SK-N-SH (cell line): ENCODE measurements at regions of chr3 and their contacts with region 1.

Region 1: DNA sequence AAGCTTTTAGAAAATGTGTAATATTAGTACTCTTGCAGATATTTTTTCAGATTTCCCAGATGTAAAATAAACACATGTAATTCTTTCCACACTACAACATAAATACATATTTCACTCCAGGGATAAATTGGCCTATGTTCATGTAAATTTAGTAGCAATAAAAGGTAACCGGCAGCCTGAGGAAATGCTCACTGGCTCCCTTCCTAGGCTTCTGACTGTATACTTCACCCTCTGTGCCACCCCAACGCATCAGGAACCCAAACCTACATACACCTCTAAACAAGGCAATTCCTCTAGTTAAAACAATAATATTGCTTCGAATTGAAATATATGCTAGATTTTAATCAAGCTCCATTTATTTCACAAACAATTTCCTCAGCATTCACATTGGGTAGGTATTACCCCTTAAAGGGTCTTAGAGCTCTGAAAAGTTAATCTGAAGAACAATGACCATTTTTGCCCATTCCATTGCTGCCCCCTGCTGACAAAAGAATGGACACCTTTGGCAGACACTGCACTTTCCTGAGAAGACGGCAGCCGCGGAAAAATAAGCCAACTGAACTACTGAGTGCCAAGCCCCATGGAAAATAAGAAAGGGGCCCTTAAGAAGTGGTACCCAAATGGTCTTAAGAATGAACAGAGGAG is 212.5 kb downstream of the OSBPL10 start:
- DNase-seq: peak; percentile 38
- H3K4me3 ChIP-seq: no peak overlapping the region
- H3K27ac ChIP-seq: no peak overlapping the region
- H3K4me1 ChIP-seq: no peaks in the 10 kb centered on the region; a peak in 1 of 4 replicates
- H3K27me3 ChIP-seq: no peaks in the 10 kb centered on the region
- CTCF ChIP-seq: peak; percentile 56
- EP300 ChIP-seq: no peak
- RAD21 ChIP-seq: peak; percentile 91

Region 2: GRCh38 chr3:31550452-31551251 is 217.9 kb before region 1 on chr3:
- CTCF ChIA-PET with region 1: interaction called, 12 read pairs
- POLR2A ChIA-PET with region 1: no interaction called
- DNase-seq: peak; percentile 43
- H3K4me3 ChIP-seq: no peak overlapping the region
- H3K27ac ChIP-seq: no peak overlapping the region; a peak in 1 of 4 replicates
- H3K4me1 ChIP-seq: peaks cover 0 to 3% of the 10 kb centered on the region in 2 experiments; a peak in 2 of 4 replicates
- H3K27me3 ChIP-seq: no peaks in the 10 kb centered on the region
- CTCF ChIP-seq: peak; percentile 78
- EP300 ChIP-seq: no peak
- RAD21 ChIP-seq: peak; percentile 70

Region 3: DNA sequence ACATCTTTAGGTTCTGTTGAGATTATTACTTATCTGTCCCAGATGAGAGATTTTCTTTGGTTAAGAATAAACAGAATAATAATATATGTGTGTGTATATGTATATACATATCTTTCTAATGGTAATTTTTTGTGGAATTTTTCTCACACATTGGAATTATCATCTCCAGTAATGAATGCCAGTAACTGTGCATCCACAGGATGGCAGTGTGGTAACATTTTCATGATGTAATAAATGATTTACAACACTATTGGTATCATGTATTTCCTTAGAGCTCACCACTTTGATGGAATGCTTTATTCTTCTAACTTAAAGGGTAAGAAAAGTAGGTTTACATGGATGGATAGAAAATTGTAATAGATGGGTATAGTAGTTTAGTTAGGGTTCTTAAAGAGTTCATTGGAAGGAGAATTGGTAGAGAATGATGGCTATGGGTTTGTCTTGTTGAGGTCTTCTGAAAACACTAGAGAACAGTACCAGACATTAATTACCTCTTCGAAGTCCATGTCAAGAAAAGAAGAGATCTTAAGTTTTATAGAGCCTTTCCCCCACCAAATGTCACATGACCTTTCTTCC is 157.8 kb before region 1 on chr3:
- CTCF ChIA-PET with region 1: interaction called, 16 read pairs
- POLR2A ChIA-PET with region 1: no interaction called
- DNase-seq: peak; percentile 30
- H3K4me3 ChIP-seq: no peak overlapping the region
- H3K27ac ChIP-seq: no peak overlapping the region
- H3K4me1 ChIP-seq: peaks cover 0 to 7% of the 10 kb centered on the region in 2 experiments; a peak in 2 of 4 replicates
- H3K27me3 ChIP-seq: no peaks in the 10 kb centered on the region
- CTCF ChIP-seq: peak; percentile 60
- EP300 ChIP-seq: no peak
- RAD21 ChIP-seq: peak; percentile 78

Region 4: DNA sequence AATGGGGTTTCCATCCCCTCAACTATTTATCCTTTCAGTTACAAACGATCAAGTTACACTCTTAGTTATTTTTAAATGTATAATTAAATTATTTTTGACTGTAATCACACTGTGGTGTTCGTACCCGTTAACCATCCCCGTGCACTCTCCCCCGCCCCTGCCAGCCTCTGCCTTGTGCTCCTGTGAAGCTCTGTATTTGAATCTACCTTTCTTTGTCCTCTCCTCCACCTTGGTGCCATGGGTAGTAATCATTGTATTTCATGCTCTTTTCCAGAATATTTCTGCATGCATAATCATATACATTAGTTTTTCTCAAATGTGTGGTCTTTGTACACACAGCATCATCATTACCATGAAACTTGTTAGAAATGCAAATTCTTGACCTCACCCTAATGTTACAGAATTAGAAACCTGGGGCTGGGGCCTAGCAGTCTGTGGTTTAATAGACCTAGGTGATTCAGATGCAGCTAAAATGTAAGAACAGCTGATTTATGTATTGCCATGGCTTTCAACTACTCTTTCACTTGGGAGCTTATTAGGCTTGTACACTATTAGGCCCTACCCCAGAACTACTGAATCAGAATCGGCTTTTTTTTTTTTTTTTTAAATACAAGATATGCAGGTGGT is 144.4 kb before region 1 on chr3:
- CTCF ChIA-PET with region 1: interaction called, 14 read pairs
- POLR2A ChIA-PET with region 1: no interaction called
- DNase-seq: no peak
- H3K4me3 ChIP-seq: no peak overlapping the region
- H3K27ac ChIP-seq: no peak overlapping the region
- H3K4me1 ChIP-seq: 0 out of 4 replicates have a peak, but pooled peaks cover 0 to 6% of the 10 kb centered on the region in 2 experiments
- H3K27me3 ChIP-seq: no peaks in the 10 kb centered on the region
- CTCF ChIP-seq: no peak
- EP300 ChIP-seq: no peak
- RAD21 ChIP-seq: no peak

Region 5: DNA sequence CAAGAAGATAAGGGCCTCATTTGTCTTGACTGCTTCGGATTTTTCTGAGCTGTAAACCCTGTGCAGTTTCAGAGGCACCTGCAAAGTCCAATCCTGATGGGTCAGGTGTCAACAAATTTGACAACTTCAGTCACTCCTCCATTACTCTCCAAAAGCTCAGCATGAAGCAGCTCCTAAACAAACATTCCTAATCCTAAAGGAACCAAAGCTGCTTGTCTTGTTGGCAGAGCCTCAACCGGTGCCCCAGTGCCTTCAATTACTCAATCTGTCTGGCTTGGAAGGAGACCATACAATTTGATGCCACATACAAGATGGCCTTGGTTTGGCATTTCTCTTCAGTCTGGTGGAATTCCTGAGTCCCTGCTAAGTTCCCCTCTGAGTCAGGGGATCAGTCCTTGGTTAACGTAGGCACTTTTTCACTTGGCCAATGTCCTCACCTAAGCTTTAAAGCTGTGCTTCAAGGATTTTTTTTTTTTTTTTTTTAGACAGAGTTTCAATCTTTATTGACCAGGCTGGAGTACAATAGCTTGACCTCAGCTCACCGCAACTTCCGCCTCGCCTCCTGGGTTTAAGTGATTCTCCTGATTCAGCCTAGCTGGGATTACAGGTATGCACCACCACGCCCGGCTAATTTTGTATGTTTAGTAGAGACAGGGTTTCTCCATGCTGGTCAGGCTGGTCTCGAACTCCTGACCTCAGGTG is 15.7 kb before region 1 on chr3:
- CTCF ChIA-PET with region 1: interaction called, 14 read pairs
- POLR2A ChIA-PET with region 1: no interaction called
- DNase-seq: no peak
- H3K4me3 ChIP-seq: no peak overlapping the region
- H3K27ac ChIP-seq: no peak overlapping the region
- H3K4me1 ChIP-seq: peaks cover 0 to 19% of the 10 kb centered on the region in 2 experiments; a peak in 2 of 4 replicates
- H3K27me3 ChIP-seq: no peaks in the 10 kb centered on the region
- CTCF ChIP-seq: no peak
- EP300 ChIP-seq: no peak
- RAD21 ChIP-seq: no peak

Region 6: DNA sequence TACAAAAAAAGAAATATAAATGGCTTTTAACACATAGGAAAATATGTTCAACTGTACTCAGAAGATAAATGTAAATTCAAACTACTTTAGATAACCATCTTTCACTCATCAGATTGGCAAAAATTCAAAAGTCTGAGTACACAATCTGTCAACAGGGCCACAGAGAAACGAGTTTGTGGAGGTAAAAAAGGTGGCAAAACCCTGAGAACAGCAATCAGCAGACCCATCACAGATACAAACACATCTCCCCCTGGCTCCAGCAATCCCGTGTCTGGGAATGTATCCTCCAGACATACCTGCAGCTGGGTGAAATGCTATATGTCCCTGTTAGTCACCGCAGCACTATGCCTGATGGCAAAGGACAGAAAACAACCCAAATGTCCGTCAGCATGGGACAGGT is 63.0 kb after region 1 on chr3:
- CTCF ChIA-PET with region 1: no interaction called
- POLR2A ChIA-PET with region 1: no interaction called
- DNase-seq: peak; percentile 23
- H3K4me3 ChIP-seq: no peak overlapping the region
- H3K27ac ChIP-seq: no peak overlapping the region
- H3K4me1 ChIP-seq: peaks cover 0 to 3% of the 10 kb centered on the region in 2 experiments; a peak in 2 of 4 replicates
- H3K27me3 ChIP-seq: no peaks in the 10 kb centered on the region
- CTCF ChIP-seq: no peak
- EP300 ChIP-seq: no peak
- RAD21 ChIP-seq: no peak

Region 7: DNA sequence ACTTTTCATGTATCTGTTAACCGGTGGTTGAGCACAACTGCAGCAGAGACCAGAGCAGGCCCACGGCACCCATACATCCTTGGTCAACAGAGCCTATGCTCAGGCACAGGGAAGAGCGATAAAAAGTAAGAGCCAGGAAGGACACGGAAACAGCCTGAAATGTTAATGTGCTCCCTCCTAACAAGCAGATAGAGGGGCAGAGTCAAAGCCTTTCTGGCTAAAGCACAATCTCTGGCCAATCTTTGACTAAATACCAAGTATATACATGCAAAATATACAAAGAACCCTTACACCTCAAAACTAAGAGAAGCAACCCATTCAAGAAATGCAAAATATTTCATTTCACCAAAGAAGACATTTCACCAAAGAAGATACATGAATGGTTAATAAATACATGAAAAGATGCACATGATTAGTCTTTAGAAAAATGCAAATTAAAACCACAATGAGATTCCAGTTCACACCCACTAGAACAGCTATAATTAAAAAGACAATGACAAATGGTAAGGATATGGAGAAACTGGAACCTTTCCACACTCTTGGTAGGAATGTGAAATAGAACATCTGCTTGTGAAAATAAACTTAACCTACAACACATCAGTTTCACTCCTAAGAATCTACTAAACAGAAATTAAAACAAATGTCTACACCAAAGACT is 124.4 kb after region 1 on chr3:
- CTCF ChIA-PET with region 1: no interaction called
- POLR2A ChIA-PET with region 1: no interaction called
- DNase-seq: no peak
- H3K4me3 ChIP-seq: no peak overlapping the region
- H3K27ac ChIP-seq: no peak overlapping the region
- H3K4me1 ChIP-seq: no peaks in the 10 kb centered on the region; a peak in 1 of 4 replicates
- H3K27me3 ChIP-seq: no peaks in the 10 kb centered on the region
- CTCF ChIP-seq: no peak
- EP300 ChIP-seq: no peak
- RAD21 ChIP-seq: no peak